Breast epithelium (tissue), 4 donors: ENCODE measurements at regions of chr2 and their contacts with region 1.

Region 1: DNA sequence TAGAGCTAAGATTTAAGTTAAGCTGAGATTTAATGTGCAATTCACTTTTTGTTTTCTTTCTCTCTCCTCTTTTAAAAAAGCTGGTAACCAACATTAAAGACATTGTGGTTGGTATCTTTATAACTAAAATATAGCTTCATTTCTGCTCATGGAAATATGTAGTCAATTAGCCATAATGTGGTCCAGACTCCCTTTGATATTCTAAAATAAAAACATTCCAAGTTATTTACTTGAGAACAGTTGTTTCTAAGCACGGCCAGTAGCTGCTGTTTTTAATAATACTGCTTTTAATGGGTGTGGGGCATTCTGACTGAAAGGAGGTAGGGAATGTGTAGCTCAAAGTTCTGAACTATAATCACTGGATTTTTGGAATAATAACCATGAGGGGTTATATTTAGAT is 183.3 kb upstream of the FBXO11 start:
- DNase-seq: no peak
- H3K4me3 ChIP-seq: no peak overlapping the region
- H3K27ac ChIP-seq: no peak overlapping the region
- H3K4me1 ChIP-seq: no peaks in the 10 kb centered on the region
- H3K27me3 ChIP-seq: no peaks in the 10 kb centered on the region
- CTCF ChIP-seq: no peak
- POLR2A ChIP-seq: no peak

Region 2: DNA sequence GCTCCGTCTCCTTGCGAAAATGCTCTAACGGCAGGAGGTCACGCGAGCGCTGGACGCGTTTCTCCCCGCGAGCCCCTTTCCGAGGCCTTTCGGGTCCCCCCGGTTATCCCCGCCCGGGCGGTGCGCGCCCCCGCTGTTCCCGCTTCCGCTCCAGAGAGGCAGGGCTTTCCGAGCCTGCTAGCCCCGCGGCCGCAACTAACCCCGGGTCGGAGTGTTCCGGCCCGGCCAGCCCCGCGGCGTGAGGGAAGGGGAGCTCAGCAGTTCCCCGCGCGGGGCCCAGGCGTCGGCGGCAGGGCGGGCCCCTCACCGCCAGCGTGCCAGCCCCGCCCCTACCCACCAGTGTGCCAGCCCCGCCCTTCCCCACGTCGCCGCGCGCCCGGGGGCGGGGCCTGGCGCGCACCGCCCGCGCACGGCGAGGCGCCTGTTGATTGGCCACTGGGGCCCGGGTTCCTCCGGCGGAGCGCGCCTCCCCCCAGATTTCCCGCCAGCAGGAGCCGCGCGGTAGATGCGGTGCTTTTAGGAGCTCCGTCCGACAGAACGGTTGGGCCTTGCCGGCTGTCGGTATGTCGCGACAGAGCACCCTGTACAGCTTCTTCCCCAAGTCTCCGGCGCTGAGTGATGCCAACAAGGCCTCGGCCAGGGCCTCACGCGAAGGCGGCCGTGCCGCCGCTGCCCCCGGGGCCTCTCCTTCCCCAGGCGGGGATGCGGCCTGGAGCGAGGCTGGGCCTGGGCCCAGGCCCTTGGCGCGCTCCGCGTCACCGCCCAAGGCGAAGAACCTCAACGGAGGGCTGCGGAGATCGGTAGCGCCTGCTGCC is 306.8 kb before region 1 on chr2 and contains the start of gene MSH6:
- intact Hi-C with region 1: loop called (anchors 5 kb)
- DNase-seq: peak; percentile 80 to 82
- H3K4me3 ChIP-seq: peak within 1 kb of the TSS; percentile 92 to 94 (median 93)
- H3K27ac ChIP-seq: peak within 1 kb of the TSS; percentile 90 to 95
- H3K4me1 ChIP-seq: peaks cover 0 to 3% of the 10 kb centered on the region in 2 donors
- H3K27me3 ChIP-seq: no peaks in the 10 kb centered on the region
- CTCF ChIP-seq: no peak
- POLR2A ChIP-seq: peak; percentile 50
- total RNA-seq, gene MSH6: 31.4 to 60.0 (median 42.6) TPM